ENCODE measurements at regions of chr15 and their contacts with region 1.

Region 1: DNA sequence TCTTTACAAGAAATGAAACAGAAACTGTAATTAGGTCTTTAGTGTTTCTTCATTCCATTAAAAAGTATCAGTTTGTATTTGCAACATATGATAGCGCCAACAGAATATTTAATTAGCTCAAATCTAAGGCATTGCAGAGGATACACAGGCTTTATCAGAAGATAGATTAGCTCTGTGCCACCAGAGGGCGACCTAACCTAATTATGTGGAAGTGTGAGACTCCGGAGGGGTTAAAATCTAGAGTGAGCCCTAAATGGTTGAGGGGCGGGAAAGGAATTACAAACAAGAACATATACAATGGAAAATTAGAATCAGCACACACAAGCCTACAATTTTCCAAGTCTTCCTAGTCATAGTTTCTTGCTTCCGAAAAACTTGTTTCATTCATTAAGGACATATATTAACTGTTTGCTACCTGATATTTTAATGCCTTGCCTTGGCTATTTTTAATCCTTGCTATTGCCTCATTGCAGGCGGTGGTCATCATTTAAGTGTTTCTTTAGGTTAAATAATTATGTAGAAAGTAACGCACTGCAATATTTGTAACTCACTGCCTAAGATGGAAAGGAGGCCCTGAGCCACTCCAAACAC is 18.0 kb upstream of the RYR3 start:
- DNase-seq: no peak
- H3K4me3 ChIP-seq: no peak overlapping the region
- H3K27ac ChIP-seq: no peak overlapping the region
- H3K4me1 ChIP-seq: peaks cover 7% of the 10 kb centered on the region
- H3K27me3 ChIP-seq: peaks cover 16% of the 10 kb centered on the region
- CTCF ChIP-seq: peak; percentile 71

Region 2: GRCh38 chr15:33067941-33068481 is 224.8 kb before region 1 on chr15:
- intact Hi-C with region 1: no loop called
- DNase-seq: peak; percentile 56
- H3K4me3 ChIP-seq: no peak overlapping the region
- H3K27ac ChIP-seq: peak overlapping the region; percentile 52
- H3K4me1 ChIP-seq: peaks cover 9% of the 10 kb centered on the region
- H3K27me3 ChIP-seq: no peaks in the 10 kb centered on the region
- CTCF ChIP-seq: no peak

Region 3: GRCh38 chr15:33448961-33449606 is 156.3 kb after region 1 on chr15:
- intact Hi-C with region 1: no loop called
- DNase-seq: no peak
- H3K4me3 ChIP-seq: no peak overlapping the region
- H3K27ac ChIP-seq: no peak overlapping the region
- H3K4me1 ChIP-seq: no peaks in the 10 kb centered on the region
- H3K27me3 ChIP-seq: peaks cover 18% of the 10 kb centered on the region
- CTCF ChIP-seq: no peak

Region 4: GRCh38 chr15:33700695-33701304 is 408.0 kb after region 1 on chr15:
- intact Hi-C with region 1: loop called (anchors 10 kb)
- DNase-seq: peak; percentile 45
- H3K4me3 ChIP-seq: no peak overlapping the region
- H3K27ac ChIP-seq: no peak overlapping the region
- H3K4me1 ChIP-seq: peaks cover 6% of the 10 kb centered on the region
- H3K27me3 ChIP-seq: peaks cover 46% of the 10 kb centered on the region
- CTCF ChIP-seq: peak; percentile 93